Caco-2 (cell line): ENCODE measurements at regions of chr1 and their contacts with region 1.

Region 1: DNA sequence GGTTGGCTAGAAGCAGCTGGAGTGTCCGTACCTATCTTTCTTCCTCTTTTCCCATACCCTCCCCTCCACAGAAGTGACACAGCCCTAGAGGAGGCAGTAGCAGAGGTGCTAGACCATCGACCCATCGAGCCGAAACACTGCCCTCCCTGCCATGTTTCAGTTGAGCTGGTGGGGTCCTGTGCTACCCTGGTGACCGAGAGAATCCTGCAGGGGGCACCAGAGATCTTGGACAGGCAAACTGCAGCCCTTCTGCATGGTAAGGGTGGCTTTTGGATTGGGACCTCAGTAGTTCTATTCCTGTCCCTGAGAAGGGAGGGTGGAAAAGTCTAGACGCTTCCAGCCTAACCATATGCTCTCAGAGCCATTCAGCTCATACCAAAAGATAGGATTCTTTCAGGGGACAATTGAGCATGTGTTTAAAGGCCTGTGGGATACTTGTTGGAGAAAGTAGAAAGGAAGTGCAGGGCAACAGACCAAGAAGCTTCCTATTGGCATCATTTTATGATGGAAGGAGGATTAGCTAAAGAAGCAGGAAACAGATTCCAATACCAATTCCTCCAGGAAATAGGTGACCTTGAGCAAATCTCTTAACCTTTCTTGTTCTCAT is 11.7 kb upstream of the BNIPL start:
- DNase-seq: peak; percentile 73 to 84
- H3K4me3 ChIP-seq: no peak overlapping the region
- H3K4me3 Mint-ChIP-seq: no peak overlapping the region
- H3K27ac Mint-ChIP-seq: no peak overlapping the region
- H3K4me1 ChIP-seq: no peaks in the 10 kb centered on the region
- H3K4me1 Mint-ChIP-seq: no peaks in the 10 kb centered on the region
- H3K27me3 ChIP-seq: no peaks in the 10 kb centered on the region
- H3K27me3 Mint-ChIP-seq: no peaks in the 10 kb centered on the region
- CTCF ChIP-seq: peak; percentile 52 to 81

Region 2: GRCh38 chr1:150841626-150842025 is 183.0 kb before region 1 on chr1:
- CTCF ChIA-PET with region 1: no interaction called
- POLR2A ChIA-PET with region 1: no interaction called
- intact Hi-C with region 1: no loop called
- DNase-seq: no peak
- H3K4me3 ChIP-seq: no peak overlapping the region
- H3K4me3 Mint-ChIP-seq: no peak overlapping the region
- H3K27ac Mint-ChIP-seq: no peak overlapping the region
- H3K4me1 ChIP-seq: no peaks in the 10 kb centered on the region; the same call in 1 of the 2 replicates
- H3K4me1 Mint-ChIP-seq: peaks cover 7% of the 10 kb centered on the region
- H3K27me3 ChIP-seq: no peaks in the 10 kb centered on the region
- H3K27me3 Mint-ChIP-seq: no peaks in the 10 kb centered on the region
- CTCF ChIP-seq: no peak

Region 3: DNA sequence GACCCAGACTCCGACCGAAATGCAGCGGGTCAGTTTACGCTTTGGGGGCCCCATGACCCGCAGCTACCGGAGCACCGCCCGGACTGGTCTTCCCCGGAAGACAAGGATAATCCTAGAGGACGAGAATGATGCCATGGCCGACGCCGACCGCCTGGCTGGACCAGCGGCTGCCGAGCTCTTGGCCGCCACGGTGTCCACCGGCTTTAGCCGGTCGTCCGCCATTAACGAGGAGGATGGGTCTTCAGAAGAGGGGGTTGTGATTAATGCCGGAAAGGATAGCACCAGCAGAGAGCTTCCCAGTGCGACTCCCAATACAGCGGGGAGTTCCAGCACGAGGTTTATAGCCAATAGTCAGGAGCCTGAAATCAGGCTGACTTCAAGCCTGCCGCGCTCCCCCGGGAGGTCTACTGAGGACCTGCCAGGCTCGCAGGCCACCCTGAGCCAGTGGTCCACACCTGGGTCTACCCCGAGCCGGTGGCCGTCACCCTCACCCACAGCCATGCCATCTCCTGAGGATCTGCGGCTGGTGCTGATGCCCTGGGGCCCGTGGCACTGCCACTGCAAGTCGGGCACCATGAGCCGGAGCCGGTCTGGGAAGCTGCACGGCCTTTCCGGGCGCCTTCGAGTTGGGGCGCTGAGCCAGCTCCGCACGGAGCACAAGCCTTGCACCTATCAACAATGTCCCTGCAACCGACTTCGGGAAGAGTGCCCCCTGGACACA is 23.4 kb after region 1 on chr1:
- CTCF ChIA-PET with region 1: interaction called, 11 read pairs
- POLR2A ChIA-PET with region 1: no interaction called
- intact Hi-C with region 1: no loop called
- DNase-seq: peak; percentile 69
- H3K4me3 ChIP-seq: peak overlapping the region; percentile 72
- H3K4me3 Mint-ChIP-seq: peak overlapping the region; percentile 81
- H3K27ac Mint-ChIP-seq: peak overlapping the region; percentile 74
- H3K4me1 ChIP-seq: peaks cover 4% of the 10 kb centered on the region
- H3K4me1 Mint-ChIP-seq: no peaks in the 10 kb centered on the region
- H3K27me3 ChIP-seq: no peaks in the 10 kb centered on the region
- H3K27me3 Mint-ChIP-seq: no peaks in the 10 kb centered on the region
- CTCF ChIP-seq: peak in 1 of 2 experiments; percentile 55

Region 4: DNA sequence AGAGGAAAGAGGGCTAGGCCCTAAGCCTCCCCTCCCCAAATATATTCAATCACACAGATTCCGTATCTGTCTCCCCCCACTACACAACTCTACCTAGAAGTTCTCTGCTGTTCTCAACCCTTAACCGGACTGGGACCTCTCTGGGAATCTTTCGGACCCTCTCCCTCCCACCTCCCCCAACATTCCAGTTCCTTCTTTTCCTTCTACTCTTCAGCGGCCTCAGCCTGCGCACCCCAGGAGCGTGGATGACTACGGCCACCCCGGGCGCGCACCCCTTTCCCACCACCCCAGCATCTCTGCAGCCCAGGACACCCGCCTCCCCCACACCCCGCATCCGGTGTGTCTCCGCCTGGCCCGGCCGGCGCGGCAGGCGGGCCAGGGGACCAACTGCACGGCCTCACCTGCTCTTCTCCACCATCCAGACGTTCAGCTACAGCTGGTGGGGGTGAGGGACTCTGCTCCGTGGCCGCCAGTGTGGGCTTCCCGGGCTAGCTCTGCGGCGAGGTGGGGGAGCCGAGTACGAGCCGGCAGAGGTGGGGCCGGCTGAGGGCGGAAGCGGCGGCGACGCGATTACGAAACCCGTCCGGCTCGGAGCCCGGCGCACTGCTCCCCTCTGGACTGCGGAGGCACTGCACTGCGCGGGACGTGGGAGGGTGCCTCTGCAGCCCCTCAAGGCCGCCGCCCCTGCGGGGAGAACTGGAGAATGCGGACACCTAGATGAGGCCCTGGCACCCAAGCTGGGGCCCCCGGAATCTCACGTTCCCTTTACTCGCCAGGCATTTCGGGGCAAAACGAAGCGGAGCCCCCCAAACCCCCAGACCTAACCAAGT is 34.6 kb after region 1 on chr1 and contains the start of gene CDC42SE1:
- CTCF ChIA-PET with region 1: interaction called, 5 read pairs
- POLR2A ChIA-PET with region 1: no interaction called
- intact Hi-C with region 1: loop called (anchors 2 kb)
- DNase-seq: peak; percentile 83 to 87
- H3K4me3 ChIP-seq: peak within 1 kb of the TSS; percentile 60
- H3K4me3 Mint-ChIP-seq: peak within 1 kb of the TSS; percentile 88
- H3K27ac Mint-ChIP-seq: peak within 1 kb of the TSS; percentile 86
- H3K4me1 ChIP-seq: peaks cover 17% of the 10 kb centered on the region
- H3K4me1 Mint-ChIP-seq: peaks cover 52% of the 10 kb centered on the region
- H3K27me3 ChIP-seq: no peaks in the 10 kb centered on the region
- H3K27me3 Mint-ChIP-seq: no peaks in the 10 kb centered on the region
- CTCF ChIP-seq: peak; percentile 82 to 90
- total RNA-seq, gene CDC42SE1: 58.7 and 59.4 TPM in 2 replicates

Region 5: DNA sequence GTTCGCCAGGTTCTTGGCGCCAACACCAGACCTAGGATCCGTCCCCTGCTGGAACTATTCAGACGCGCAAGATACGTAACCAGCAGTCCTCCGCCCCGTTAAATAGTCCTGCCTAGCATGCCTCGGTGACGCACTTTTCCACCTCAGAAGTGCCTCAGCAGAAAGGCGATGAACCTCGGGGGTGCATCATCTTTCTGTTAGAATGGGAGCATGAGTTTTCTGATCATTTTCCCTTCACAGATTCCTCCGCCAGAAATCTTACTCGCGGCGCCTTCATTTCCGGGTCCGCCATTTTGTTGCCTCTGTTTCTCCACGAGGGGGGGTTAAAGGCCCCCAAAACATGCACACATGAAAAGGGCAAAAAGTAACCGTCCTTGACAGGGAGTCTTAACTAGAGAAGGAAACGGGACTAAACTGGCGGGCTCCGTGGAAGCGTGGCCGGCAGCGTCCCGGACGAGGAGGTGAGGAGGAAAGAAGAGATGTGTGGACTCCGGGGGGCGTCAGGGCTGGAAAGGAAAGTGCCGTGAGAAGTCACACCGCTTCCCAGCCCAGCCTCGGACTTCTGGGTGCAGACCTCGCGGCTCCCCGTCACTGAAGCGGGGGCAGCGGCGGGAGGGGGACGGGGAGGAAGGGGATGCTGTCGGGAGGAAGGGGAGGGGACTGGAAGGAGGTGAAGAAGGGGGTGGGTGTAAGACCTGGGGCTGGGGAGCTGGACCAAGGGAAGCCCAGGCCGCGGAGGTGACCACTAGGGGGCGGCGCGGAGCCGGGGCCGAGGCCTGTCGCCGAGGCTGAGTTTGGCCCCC is 46.0 kb after region 1 on chr1 and contains the start of gene GABPB2:
- CTCF ChIA-PET with region 1: no interaction called
- POLR2A ChIA-PET with region 1: no interaction called
- intact Hi-C with region 1: loop called (anchors 2 kb)
- DNase-seq: peak; percentile 87 to 90
- H3K4me3 ChIP-seq: peak within 1 kb of the TSS; percentile 64
- H3K4me3 Mint-ChIP-seq: peak within 1 kb of the TSS; percentile 98
- H3K27ac Mint-ChIP-seq: peak within 1 kb of the TSS; percentile 100
- H3K4me1 ChIP-seq: peaks cover 10% of the 10 kb centered on the region; the same call in 1 of the 2 replicates
- H3K4me1 Mint-ChIP-seq: no peaks in the 10 kb centered on the region
- H3K27me3 ChIP-seq: no peaks in the 10 kb centered on the region
- H3K27me3 Mint-ChIP-seq: no peaks in the 10 kb centered on the region
- CTCF ChIP-seq: peak; percentile 74 to 95
- total RNA-seq, gene GABPB2: 2.0 and 2.6 TPM in 2 replicates

Region 6: DNA sequence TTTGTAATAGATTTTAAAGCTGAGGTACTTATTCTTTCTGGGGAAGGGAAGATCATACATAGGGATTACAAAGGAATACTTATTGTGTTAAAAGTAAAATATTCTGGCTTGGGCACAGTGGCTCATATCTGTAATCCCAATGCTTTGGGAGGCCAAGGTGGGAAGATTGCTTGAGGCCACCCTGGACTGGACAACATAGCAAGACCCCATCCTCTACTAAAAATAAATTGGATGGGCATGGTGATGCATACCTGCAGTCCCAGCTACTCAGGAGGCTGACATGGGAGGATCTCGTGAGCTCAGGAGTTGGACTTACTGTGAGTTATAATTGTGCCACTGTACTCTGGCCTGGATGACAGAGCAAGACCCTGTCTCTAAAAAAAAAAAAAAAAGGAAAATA is 73.5 kb after region 1 on chr1:
- CTCF ChIA-PET with region 1: interaction called, 10 read pairs
- POLR2A ChIA-PET with region 1: no interaction called
- intact Hi-C with region 1: no loop called
- DNase-seq: peak in 1 of 2 experiments; percentile 2
- H3K4me3 ChIP-seq: no peak overlapping the region
- H3K4me3 Mint-ChIP-seq: no peak overlapping the region
- H3K27ac Mint-ChIP-seq: no peak overlapping the region
- H3K4me1 ChIP-seq: no peaks in the 10 kb centered on the region
- H3K4me1 Mint-ChIP-seq: no peaks in the 10 kb centered on the region
- H3K27me3 ChIP-seq: no peaks in the 10 kb centered on the region
- H3K27me3 Mint-ChIP-seq: no peaks in the 10 kb centered on the region
- CTCF ChIP-seq: no peak

Region 7: DNA sequence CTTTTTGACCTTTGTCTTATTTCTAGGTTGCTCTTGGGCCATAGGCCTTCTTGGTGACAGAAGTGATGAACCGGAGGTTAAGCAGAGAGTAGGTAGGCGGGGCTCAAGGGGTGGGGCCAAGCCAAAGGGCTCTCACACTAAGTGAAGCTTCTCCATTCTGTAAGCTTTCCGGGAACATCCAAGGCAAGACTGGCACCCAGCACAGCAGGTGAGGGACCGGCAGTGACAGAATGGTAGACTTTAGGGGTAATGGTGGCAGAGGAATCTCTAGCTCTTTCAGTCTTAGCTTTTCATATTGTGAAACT is 131.8 kb after region 1 on chr1 and contains the start of gene TNFAIP8L2:
- CTCF ChIA-PET with region 1: no interaction called
- POLR2A ChIA-PET with region 1: no interaction called
- intact Hi-C with region 1: loop called (anchors 5 kb)
- DNase-seq: no peak
- H3K4me3 ChIP-seq: no peak within 1 kb of the TSS
- H3K4me3 Mint-ChIP-seq: no peak within 1 kb of the TSS
- H3K27ac Mint-ChIP-seq: no peak within 1 kb of the TSS
- H3K4me1 ChIP-seq: 0 out of 2 replicates have a peak, but pooled peaks cover 5% of the 10 kb centered on the region
- H3K4me1 Mint-ChIP-seq: no peaks in the 10 kb centered on the region
- H3K27me3 ChIP-seq: no peaks in the 10 kb centered on the region
- H3K27me3 Mint-ChIP-seq: no peaks in the 10 kb centered on the region
- CTCF ChIP-seq: no peak
- total RNA-seq, gene TNFAIP8L2: not detected in 2 replicates